GM10248 (cell line): ENCODE measurements at regions of chr18 and their contacts with region 1.

Region 1: GRCh38 chr18:13746633-13747032 is 20.2 kb downstream of the RNMT start:
- DNase-seq: no peak
- CTCF ChIP-seq: no peak

Region 2: DNA sequence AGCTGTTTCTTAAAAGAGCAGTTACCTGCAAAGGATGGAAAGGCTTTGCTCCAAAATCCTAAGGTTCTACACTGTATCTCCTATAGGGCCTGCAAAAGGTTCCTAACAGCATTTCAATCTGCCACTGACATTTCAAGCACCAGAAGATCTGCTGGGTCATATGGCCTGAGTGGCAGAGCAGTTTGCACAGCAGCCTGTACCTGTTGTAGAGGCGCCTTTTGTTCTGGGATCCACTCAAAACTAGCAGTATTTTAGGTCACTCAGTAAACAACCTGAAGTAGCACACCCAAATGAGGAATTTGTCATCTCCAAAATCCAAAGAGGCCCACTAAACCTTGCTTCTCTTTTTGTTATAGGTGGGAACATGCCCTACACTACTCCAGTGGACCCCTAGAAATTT is 26.5 kb before region 1 on chr18:
- CTCF ChIA-PET with region 1: no interaction called
- POLR2A ChIA-PET with region 1: no interaction called
- DNase-seq: no peak
- CTCF ChIP-seq: no peak

Region 3: GRCh38 chr18:13758622-13759021 is 12.0 kb after region 1 on chr18:
- CTCF ChIA-PET with region 1: interaction called, 10 read pairs
- POLR2A ChIA-PET with region 1: no interaction called
- DNase-seq: no peak
- CTCF ChIP-seq: no peak